Activated B cell treated with CpG ODN at 0.5 μM for 24 hours (primary cell): ENCODE measurements at regions of chr20 and their contacts with region 1.

Region 1: GRCh38 chr20:4082406-4083097 is 67.2 kb upstream of the RNF24 start:
- DNase-seq: peak; percentile 26
- ATAC-seq: peak; percentile 62
- H3K4me3 Mint-ChIP-seq: peak overlapping the region; percentile 39
- H3K27ac Mint-ChIP-seq: peak overlapping the region; percentile 81
- H3K4me1 Mint-ChIP-seq: peaks cover 34% of the 10 kb centered on the region
- H3K27me3 Mint-ChIP-seq: peaks cover 4% of the 10 kb centered on the region
- CTCF ChIP-seq: no peak

Region 2: DNA sequence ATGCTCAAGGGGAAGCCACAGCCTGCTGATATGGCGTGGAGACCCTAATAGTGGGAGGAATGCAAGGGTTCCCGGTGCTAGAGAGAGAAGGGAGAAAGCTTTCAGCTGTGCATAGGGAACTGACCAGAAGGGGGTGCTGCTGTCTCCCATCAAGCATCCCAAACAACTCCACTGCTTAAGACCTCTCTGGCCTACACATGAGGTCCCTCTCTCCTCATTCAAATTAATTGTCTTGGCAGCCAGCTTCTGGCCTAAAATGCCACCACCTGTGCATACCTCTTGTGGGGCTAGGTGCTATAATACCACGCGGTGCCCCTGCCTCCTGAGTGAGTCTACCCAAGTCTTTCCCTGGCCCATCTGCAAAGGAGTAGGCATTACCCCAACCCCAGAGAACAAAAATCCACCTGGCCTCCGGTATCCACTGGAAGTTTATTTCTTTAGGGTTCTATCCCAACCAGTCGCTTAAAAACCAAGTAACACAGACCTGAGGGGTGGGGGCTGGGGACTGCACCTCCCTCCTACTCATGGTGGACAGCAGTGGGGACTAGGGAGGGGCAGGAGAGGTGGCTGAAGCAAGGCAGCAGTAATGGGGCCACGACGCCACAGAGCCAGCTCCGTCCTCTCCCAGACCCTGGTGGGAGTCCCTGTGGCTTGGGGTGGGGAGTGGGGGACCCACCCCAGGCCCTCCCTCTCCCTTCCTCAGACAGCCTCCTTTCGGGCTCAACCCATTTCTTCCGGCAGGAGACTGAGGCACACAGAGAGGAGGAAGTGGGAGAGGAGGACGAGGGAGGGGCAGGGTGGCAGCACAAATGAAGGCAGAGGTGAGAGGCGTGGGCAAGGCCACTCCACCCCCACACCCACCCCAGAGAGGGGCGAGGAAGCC is 329.2 kb before region 1 on chr20:
- CTCF ChIA-PET with region 1: interaction called, 6 read pairs
- POLR2A ChIA-PET with region 1: no interaction called
- intact Hi-C with region 1: loop called (anchors 1 kb)
- DNase-seq: no peak
- ATAC-seq: peak; percentile 63
- H3K4me3 Mint-ChIP-seq: peak overlapping the region; percentile 12
- H3K27ac Mint-ChIP-seq: no peak overlapping the region
- H3K4me1 Mint-ChIP-seq: peaks cover 11% of the 10 kb centered on the region
- H3K27me3 Mint-ChIP-seq: no peaks in the 10 kb centered on the region
- CTCF ChIP-seq: no peak

Region 3: GRCh38 chr20:3795511-3796468 is 286.8 kb before region 1 on chr20 and contains the start of gene CDC25B:
- CTCF ChIA-PET with region 1: no interaction called
- POLR2A ChIA-PET with region 1: interaction called, 11 read pairs
- intact Hi-C with region 1: no loop called
- DNase-seq: peak; percentile 75
- ATAC-seq: peak; percentile 84
- H3K4me3 Mint-ChIP-seq: peak within 1 kb of the TSS; percentile 92
- H3K27ac Mint-ChIP-seq: peak within 1 kb of the TSS; percentile 95
- H3K4me1 Mint-ChIP-seq: peaks cover 50% of the 10 kb centered on the region
- H3K27me3 Mint-ChIP-seq: no peaks in the 10 kb centered on the region
- CTCF ChIP-seq: no peak
- total RNA-seq, gene CDC25B: 21.6 and 24.3 TPM in 2 replicates

Region 4: GRCh38 chr20:3935295-3935955 is 147.1 kb before region 1 on chr20:
- CTCF ChIA-PET with region 1: no interaction called
- POLR2A ChIA-PET with region 1: no interaction called
- intact Hi-C with region 1: loop called (anchors 1 kb)
- DNase-seq: no peak
- ATAC-seq: no peak
- H3K4me3 Mint-ChIP-seq: no peak overlapping the region
- H3K27ac Mint-ChIP-seq: no peak overlapping the region
- H3K4me1 Mint-ChIP-seq: peaks cover 5% of the 10 kb centered on the region
- H3K27me3 Mint-ChIP-seq: no peaks in the 10 kb centered on the region
- CTCF ChIP-seq: no peak

Region 5: GRCh38 chr20:4038047-4038459 is 44.5 kb before region 1 on chr20:
- CTCF ChIA-PET with region 1: interaction called, 4 read pairs
- POLR2A ChIA-PET with region 1: interaction called, 12 read pairs
- intact Hi-C with region 1: loop called (anchors 2 kb)
- DNase-seq: peak; percentile 52
- ATAC-seq: peak; percentile 100
- H3K4me3 Mint-ChIP-seq: peak overlapping the region; percentile 82
- H3K27ac Mint-ChIP-seq: peak overlapping the region; percentile 96
- H3K4me1 Mint-ChIP-seq: peaks cover 16% of the 10 kb centered on the region
- H3K27me3 Mint-ChIP-seq: no peaks in the 10 kb centered on the region
- CTCF ChIP-seq: no peak